ENCODE measurements at regions of chr2 and their contacts with region 1.

Region 1: DNA sequence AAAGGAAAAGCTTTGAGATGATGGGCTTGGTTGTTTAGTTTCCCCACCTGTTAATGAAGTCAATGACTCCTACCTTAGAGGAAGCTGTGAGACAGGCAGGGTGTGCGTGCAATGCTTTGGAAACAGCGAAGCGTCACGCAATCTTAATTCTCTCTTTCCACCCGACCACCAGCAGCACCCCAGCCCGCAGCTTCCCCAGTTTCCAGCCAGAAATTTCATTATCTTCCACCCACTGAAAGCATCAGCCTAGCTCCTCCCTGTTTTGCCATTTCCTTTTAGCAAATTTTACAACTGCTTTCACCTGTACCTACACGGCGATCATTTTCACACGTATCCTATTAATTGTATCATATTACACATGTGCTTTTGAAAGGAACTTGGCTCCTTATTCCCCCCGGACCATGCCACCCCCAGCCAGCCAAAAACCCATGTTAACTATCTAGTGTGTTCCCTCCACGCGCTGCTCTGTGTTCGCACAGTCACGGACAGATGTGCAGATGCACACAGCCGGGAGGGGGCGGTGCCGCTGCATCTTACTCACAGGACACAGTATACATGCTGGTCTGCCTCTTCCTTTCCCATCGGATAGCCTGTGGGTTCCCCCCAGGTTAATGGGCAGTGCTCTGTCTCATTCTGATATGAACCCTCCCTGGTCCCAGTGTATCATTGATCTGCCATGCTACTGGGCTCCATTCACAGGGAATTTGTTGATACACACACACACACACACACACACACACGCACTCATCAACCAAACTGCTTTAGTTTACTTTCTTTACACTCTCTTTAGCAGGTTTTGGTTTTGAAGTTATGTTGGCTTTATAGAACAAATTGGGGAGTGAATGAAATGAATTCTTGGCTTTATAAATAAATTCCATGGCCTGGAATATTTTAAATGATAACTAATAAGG is 22.4 kb downstream of the CYP27C1 start:
- DNase-seq: peak; percentile 82
- ATAC-seq: peak; percentile 84
- H3K4me3 Mint-ChIP-seq: peak overlapping the region; percentile 26; the same call in 1 of the 2 replicates
- H3K27ac Mint-ChIP-seq: no peak overlapping the region
- H3K4me1 Mint-ChIP-seq: peaks cover 39% of the 10 kb centered on the region
- H3K27me3 Mint-ChIP-seq: no peaks in the 10 kb centered on the region
- CTCF ChIP-seq: 0 out of 2 replicates have a peak, but pooled peaks have one; percentile 26

Region 2: GRCh38 chr2:126971481-126972278 is 226.1 kb before region 1 on chr2:
- CTCF ChIA-PET with region 1: no interaction called
- POLR2A ChIA-PET with region 1: no interaction called
- DNase-seq: peak; percentile 86
- ATAC-seq: peak; percentile 88
- H3K4me3 Mint-ChIP-seq: peak overlapping the region; percentile 14; the same call in 1 of the 2 replicates
- H3K27ac Mint-ChIP-seq: no peak overlapping the region
- H3K4me1 Mint-ChIP-seq: peaks cover 10% of the 10 kb centered on the region
- H3K27me3 Mint-ChIP-seq: peaks cover 45% of the 10 kb centered on the region
- CTCF ChIP-seq: peak; percentile 96

Region 3: GRCh38 chr2:127157651-127158470 is 39.9 kb before region 1 on chr2:
- CTCF ChIA-PET with region 1: interaction called, 10 read pairs
- POLR2A ChIA-PET with region 1: no interaction called
- DNase-seq: peak; percentile 78
- ATAC-seq: peak; percentile 98
- H3K4me3 Mint-ChIP-seq: no peak overlapping the region
- H3K27ac Mint-ChIP-seq: no peak overlapping the region
- H3K4me1 Mint-ChIP-seq: peaks cover 20% of the 10 kb centered on the region
- H3K27me3 Mint-ChIP-seq: no peaks in the 10 kb centered on the region
- CTCF ChIP-seq: no peak; the same call in 1 of the 2 replicates

Region 4: GRCh38 chr2:127182626-127183458 is 14.9 kb before region 1 on chr2:
- CTCF ChIA-PET with region 1: interaction called, 20 read pairs
- POLR2A ChIA-PET with region 1: no interaction called
- DNase-seq: no peak
- ATAC-seq: peak; percentile 41; the same call in 1 of the 2 replicates
- H3K4me3 Mint-ChIP-seq: no peak overlapping the region
- H3K27ac Mint-ChIP-seq: no peak overlapping the region; the same call in 1 of the 2 replicates
- H3K4me1 Mint-ChIP-seq: peaks cover 25% of the 10 kb centered on the region
- H3K27me3 Mint-ChIP-seq: no peaks in the 10 kb centered on the region
- CTCF ChIP-seq: no peak

Region 5: GRCh38 chr2:127219171-127220070 is 21.7 kb after region 1 on chr2:
- CTCF ChIA-PET with region 1: interaction called, 20 read pairs
- POLR2A ChIA-PET with region 1: no interaction called
- DNase-seq: peak; percentile 65
- ATAC-seq: peak; percentile 32
- H3K4me3 Mint-ChIP-seq: peak overlapping the region; percentile 94
- H3K27ac Mint-ChIP-seq: no peak overlapping the region
- H3K4me1 Mint-ChIP-seq: peaks cover 27% of the 10 kb centered on the region
- H3K27me3 Mint-ChIP-seq: peaks cover 38% of the 10 kb centered on the region
- CTCF ChIP-seq: no peak

Region 6: GRCh38 chr2:127293748-127294562 is 96.2 kb after region 1 on chr2 and contains the start of gene ERCC3:
- CTCF ChIA-PET with region 1: interaction called, 36 read pairs
- POLR2A ChIA-PET with region 1: interaction called, 5 read pairs
- DNase-seq: peak; percentile 81
- ATAC-seq: peak; percentile 97
- H3K4me3 Mint-ChIP-seq: peak within 1 kb of the TSS; percentile 98
- H3K27ac Mint-ChIP-seq: peak within 1 kb of the TSS; percentile 99
- H3K4me1 Mint-ChIP-seq: peaks cover 18% of the 10 kb centered on the region
- H3K27me3 Mint-ChIP-seq: no peaks in the 10 kb centered on the region
- CTCF ChIP-seq: no peak
- total RNA-seq, gene ERCC3: 43.3 to 48.1 TPM (median 43.8 TPM) in 3 replicates

Region 7: DNA sequence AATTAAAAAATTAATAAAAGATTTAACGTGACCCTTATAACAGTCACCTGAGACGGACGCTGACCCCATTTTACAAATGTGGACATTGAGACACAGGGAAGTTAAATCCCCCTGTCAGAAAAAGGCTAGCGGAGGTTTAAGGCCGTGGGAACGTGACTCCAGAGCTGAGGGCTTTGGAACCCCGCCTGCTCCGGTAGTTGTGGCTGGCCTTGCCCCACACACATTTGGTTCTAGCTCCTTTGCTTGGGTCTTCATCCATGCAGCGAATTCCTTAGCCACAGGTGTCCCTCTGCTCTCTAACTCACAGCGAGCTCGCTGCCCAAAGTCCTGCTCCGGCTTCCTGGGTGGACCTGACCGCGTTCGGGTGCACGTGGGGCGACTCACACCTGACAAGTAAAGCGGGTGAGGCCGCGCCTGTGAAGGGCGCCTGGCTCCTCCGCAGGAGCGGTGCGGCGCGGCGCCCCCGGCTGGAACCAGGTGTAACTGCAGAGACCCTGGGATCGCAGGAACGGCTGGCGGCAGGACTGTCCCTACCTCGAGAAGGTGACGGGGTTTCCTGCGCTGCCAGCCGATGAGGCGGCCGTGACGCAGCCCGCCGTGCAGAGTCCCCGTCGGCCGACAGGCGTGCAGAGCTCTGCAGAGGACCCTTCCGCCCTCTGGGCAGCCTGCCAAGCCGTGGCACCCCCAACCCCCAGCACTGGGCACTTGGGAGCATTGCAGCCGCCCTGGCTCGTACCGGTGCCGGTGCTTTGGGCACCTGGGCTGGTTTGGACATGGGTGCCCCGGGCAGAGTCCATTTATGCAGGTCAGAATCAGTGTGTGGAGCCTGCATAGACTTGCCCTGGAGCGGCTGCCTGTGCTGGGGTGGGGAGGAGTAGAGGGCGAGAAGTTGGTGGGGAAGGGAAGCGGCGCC is 218.1 kb after region 1 on chr2:
- CTCF ChIA-PET with region 1: interaction called, 22 read pairs
- POLR2A ChIA-PET with region 1: no interaction called
- DNase-seq: peak; percentile 90
- ATAC-seq: peak; percentile 94
- H3K4me3 Mint-ChIP-seq: peak overlapping the region; percentile 63
- H3K27ac Mint-ChIP-seq: no peak overlapping the region
- H3K4me1 Mint-ChIP-seq: peaks cover 14% of the 10 kb centered on the region
- H3K27me3 Mint-ChIP-seq: peaks cover 57% of the 10 kb centered on the region
- CTCF ChIP-seq: peak; percentile 59

Region 8: DNA sequence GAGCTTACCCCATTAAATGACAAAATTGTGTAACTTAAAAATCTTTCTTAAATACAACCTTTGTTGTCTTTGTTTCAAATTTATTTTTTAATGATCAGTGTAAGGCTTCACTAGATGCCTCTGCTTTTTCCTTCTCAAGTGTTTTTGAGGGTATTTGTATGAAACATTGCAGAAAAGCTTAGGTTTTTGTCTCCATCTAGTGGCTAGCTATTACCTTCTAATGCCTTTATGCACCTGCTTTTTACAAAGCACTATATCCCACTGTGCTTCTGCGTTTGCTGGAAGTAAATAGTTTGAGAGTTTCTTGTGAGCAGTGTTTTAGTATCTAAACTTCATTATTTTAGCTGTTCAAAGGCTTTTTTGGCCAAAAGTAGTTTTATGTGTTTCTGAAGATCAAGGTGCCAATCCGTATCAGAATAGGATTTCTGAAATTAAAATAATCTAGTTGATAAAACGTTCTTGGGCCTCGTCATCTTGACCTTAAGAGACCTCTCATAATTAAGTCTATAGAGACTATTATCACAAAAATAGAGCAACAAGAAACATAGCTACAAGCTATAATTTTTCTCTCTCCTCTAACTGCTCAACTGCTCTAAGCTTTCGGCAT is 281.6 kb after region 1 on chr2:
- CTCF ChIA-PET with region 1: interaction called, 18 read pairs
- POLR2A ChIA-PET with region 1: no interaction called
- DNase-seq: no peak
- ATAC-seq: peak; percentile 56
- H3K4me3 Mint-ChIP-seq: no peak overlapping the region
- H3K27ac Mint-ChIP-seq: no peak overlapping the region
- H3K4me1 Mint-ChIP-seq: peaks cover 34% of the 10 kb centered on the region
- H3K27me3 Mint-ChIP-seq: no peaks in the 10 kb centered on the region
- CTCF ChIP-seq: peak; percentile 39; the same call in 1 of the 2 replicates

Measured in WTC11 (cell line).